Left lung (tissue), 14 donors: ENCODE measurements at regions of chr17 and their contacts with region 1.

Region 1: DNA sequence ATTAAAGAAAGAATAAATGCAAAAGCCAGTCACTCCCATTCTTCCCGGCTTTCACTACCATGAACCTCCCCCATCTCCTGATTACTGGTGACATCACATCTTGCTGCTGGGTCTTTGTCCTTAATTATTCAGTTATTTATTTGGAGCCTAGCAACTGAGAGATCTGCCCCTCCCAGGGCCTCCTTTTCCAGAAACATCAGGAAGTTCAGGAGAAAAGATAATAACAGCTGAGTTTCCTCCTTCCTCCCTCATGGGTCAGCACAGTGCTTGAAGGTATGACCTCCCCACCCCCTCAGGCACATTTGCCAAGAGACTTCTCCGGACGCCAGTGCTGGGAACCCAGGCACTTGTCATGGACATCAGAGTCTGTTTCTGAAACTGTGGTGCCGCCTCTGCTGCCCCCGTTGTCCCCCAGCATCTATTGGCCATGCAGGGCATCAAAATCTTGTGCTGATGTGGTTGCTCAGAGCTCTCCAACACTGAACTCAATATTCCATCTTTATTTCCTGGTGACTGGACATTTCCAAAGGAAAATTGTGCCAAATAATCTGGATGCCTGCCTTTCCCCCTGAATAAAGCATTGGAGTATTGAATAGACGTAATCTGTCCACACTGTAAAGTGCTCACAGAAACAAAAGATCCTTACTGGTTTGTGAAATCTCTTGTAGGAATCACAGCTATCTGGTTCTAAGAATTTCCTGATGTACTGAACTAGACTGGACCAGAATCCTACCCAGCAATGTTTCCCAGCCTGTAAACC is 71.8 kb downstream of the ZNF18 start:
- DNase-seq: peak in 1 of 4 donors; percentile 14
- ATAC-seq: no peak
- H3K4me3 ChIP-seq: no peak overlapping the region
- H3K27ac ChIP-seq: no peak overlapping the region
- H3K4me1 ChIP-seq: no peaks in the 10 kb centered on the region
- H3K27me3 ChIP-seq: no peaks in the 10 kb centered on the region
- CTCF ChIP-seq: no peak

Region 2: DNA sequence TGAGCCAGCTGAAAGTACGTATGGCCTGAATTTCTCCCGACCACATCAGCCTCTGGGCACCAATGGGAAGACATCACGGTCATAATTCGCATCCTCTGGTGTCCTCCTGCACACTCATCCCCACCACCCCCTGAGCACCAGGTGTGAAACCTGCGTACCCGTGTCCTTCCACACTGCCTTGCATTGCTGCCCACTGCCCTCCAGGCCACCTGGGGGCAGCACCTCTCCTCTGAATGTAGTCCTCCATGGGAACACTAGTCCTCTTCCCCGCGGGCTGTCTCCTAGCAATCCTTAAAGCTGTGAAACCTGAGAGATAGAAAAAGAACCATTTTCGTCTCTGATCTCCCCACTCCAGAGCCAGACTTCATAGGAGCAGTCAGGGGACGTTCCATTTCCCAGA is 53.7 kb before region 1 on chr17:
- intact Hi-C with region 1: loop called in 1 of 2 experiments (anchors 10 kb)
- DNase-seq: no peak
- ATAC-seq: no peak
- H3K4me3 ChIP-seq: no peak overlapping the region
- H3K27ac ChIP-seq: no peak overlapping the region
- H3K4me1 ChIP-seq: no peaks in the 10 kb centered on the region
- H3K27me3 ChIP-seq: no peaks in the 10 kb centered on the region
- CTCF ChIP-seq: no peak